Pancreas (tissue), 10 donors: ENCODE measurements at regions of chrX and their contacts with region 1.

Region 1: DNA sequence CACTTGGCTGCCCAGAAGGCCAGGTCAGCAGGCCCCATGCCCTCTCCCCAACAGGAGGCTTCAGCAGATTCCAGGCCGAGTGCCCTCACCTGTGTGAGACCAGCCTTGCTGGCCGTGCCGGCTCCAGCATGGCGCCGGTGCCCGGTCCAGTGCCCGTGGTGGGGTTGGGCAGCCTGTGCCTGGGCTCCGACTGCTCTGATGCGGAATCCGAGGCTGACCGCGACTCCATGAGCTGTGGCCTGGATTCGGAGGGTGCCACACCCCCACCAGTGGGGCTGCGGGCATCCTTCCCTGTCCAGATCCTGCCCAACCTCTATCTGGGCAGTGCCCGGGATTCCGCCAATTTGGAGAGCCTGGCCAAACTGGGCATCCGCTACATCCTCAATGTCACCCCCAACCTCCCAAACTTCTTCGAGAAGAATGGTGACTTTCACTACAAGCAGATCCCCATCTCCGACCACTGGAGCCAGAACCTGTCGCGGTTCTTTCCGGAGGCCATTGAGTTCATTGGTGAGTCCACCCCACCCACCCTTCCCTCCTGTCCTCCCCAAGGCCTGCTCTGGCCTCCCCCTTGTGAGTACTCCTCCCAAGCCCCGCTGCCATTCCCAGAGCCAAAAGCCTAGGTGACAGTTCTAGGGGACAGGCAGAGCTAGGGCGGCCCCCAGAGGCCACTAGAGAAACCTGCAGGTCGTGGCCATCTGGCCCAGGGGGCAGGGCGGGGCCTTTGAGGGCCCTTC is 2.3 kb downstream of the DUSP9 start:
- DNase-seq: peak; percentile 10 to 77 (median 39)
- ATAC-seq: peak in 3 of 4 donors; percentile 76 to 82 (median 79)
- H3K4me3 ChIP-seq: no peak overlapping the region
- H3K27ac ChIP-seq: no peak overlapping the region
- H3K4me1 ChIP-seq: no peaks in the 10 kb centered on the region
- H3K27me3 ChIP-seq: peaks cover 0 to 16% (median 5%) of the 10 kb centered on the region in 4 donors
- CTCF ChIP-seq: peak in 1 of 4 donors; percentile 9

Region 2: DNA sequence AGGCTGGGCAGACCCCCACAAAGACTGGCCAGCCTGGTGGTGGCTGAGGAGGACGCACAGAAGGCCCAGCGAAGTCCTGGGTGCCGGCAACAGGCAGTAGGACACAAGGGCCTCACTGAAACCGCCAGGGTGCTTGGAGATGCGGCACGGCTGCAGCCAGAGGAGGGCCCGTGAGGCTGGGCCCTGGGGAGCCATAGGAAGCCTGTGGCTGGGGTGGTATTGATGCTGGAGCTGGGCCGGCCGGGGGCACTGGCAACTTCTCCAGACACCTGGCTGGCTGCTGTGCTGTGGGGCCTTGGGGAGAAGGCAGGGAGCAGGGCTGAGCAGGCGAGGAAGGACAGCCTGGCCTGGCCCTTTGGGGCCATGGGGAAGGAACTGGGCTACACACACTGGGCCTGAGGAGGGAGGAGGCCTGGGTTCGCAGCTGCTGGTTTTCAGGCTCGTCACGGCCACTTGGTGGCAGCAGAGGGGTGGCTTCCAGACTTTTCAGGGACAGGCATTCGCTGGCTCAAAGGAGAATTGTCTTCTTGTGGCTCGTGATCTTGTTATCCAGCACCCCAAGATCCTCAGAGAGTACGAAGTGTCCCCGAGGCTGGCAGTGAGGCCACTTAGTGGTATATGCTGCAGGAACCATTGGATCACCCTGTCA is 94.7 kb before region 1 on chrX:
- intact Hi-C with region 1: loop called in 1 of 3 experiments (anchors 10 kb)
- DNase-seq: peak in 5 of 6 donors; percentile 41 to 83 (median 67)
- ATAC-seq: peak; percentile 60 to 93 (median 90)
- H3K4me3 ChIP-seq: no peak overlapping the region
- H3K27ac ChIP-seq: no peak overlapping the region
- H3K4me1 ChIP-seq: no peaks in the 10 kb centered on the region
- H3K27me3 ChIP-seq: peaks cover 0 to 4% (median 0%) of the 10 kb centered on the region in 4 donors
- CTCF ChIP-seq: peak; percentile 48 to 68 (median 57)